ENCODE measurements at regions of chr7 and their contacts with region 1.

Region 1: DNA sequence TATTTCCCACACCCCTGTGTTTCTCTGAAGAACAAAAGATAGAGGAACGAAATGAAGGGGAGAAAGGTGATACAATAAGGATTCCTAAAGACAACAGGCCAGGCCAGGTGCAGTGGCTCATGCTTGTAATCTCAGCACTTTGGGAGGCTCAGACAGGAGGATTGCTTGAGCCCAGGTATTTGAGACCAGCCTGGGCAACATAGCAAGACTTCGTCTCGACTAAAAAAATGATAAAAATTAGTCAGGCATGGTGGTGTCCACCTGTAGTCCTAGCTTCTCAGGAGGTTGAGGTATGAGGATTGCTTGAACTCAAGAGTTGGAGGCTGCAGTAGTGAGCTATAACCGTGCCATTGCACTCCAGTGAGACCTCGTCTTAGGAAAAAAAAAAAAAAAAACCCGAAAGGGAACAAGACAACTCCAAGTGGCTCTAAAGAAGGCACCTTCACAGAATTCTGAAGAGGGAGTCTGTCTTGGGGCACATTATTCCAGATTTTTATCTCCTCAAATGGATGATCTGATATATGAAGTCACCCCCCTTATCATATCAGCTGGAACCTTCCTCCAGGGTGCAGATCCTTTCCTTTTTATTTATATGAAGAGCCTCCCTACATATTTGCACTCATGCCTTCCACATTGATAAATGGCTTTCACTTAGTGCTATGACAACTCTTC is 41.5 kb upstream of the FAM3C start:
- DNase-seq: no peak
- ATAC-seq: no peak
- H3K4me3 ChIP-seq: peak overlapping the region; percentile 50
- H3K4me3 Mint-ChIP-seq: peak overlapping the region in 9 of 10 donors; percentile 74 to 88 (median 80)
- H3K27ac ChIP-seq: peak overlapping the region; percentile 46
- H3K27ac Mint-ChIP-seq: peak overlapping the region; percentile 91 to 98 (median 96)
- H3K4me1 ChIP-seq: peaks cover 20 to 25% of the 10 kb centered on the region in 2 donors
- H3K4me1 Mint-ChIP-seq: peaks cover 12 to 53% (median 42%) of the 10 kb centered on the region in 7 donors
- H3K27me3 ChIP-seq: no peaks in the 10 kb centered on the region
- H3K27me3 Mint-ChIP-seq: no peaks in the 10 kb centered on the region

Region 2: DNA sequence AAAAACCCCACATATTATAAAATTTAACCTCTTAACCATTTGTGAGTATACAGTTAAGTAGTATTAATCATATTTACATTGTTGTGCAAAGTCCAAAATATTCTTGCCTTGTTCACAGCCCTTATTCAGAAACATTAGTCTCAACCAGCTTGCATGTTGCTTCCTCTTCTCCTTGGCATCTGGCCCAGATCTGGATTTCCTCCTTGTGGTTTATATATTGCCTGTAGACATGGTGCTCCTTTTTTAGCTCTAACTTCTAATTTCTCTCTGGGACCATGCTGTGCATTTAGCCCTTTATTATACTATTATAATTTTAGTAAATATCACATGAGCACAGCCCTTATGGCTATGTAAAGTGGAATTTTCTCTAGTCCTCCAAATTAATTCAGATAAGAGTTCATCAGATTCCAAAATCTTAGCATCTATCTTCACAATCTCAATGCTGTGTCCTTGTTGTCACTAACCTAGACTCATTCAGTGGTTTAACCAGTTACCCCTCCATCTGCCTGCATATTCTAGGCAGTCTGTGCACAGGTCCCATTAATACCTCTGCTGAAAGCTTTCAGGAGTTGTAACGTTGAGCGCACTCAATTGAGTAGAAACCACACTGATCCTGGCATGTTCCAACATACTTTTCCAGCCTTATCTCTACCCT is 441.1 kb before region 1 on chr7:
- CTCF ChIA-PET with region 1: no interaction called
- POLR2A ChIA-PET with region 1: no interaction called
- intact Hi-C with region 1: loop called in 1 of 2 experiments (anchors 5 kb)
- DNase-seq: peak in 7 of 9 donors; percentile 60 to 80 (median 75)
- ATAC-seq: peak; percentile 91
- H3K4me3 ChIP-seq: no peak overlapping the region
- H3K4me3 Mint-ChIP-seq: peak overlapping the region in 9 of 10 donors; percentile 10 to 69 (median 32)
- H3K27ac ChIP-seq: no peak overlapping the region
- H3K27ac Mint-ChIP-seq: peak overlapping the region in 3 of 9 donors; percentile 4 to 38 (median 34)
- H3K4me1 ChIP-seq: peaks cover 0 to 13% of the 10 kb centered on the region in 2 donors
- H3K4me1 Mint-ChIP-seq: peaks cover 7 to 56% (median 42%) of the 10 kb centered on the region in 7 donors
- H3K27me3 ChIP-seq: no peaks in the 10 kb centered on the region
- H3K27me3 Mint-ChIP-seq: peaks cover 0 to 42% (median 15%) of the 10 kb centered on the region in 5 donors

Region 3: DNA sequence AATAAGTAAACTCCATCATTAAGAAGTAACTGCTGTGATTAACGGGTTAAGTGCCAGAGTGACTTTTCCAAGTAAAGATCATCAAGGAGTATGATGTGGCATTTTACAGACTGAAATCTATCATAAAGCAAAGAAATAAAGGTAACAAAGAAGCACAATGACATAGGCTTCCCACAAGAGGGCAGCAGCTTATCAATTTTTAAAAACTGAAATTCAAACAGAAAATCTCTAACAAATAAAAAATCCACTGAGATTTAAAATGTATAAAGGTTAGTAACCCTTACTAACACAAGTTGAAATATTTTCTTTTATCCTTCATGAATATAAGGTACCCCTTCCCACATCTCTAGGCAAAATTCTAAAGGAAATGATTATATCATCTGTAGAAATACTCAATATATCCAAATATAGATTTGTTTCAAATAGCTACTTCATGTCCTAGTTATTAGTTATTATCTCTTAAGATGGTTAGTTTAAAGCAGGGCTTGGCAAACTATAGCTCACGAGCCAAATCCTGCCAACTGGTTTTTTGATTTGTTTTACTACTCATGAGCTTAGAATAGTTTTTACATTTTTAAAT is 70.7 kb before region 1 on chr7:
- CTCF ChIA-PET with region 1: interaction called, 9 read pairs
- POLR2A ChIA-PET with region 1: no interaction called
- intact Hi-C with region 1: loop called (anchors 1 to 2 kb)
- DNase-seq: peak in 6 of 9 donors; percentile 26 to 61 (median 57)
- ATAC-seq: peak; percentile 67
- H3K4me3 ChIP-seq: no peak overlapping the region
- H3K4me3 Mint-ChIP-seq: no peak overlapping the region
- H3K27ac ChIP-seq: no peak overlapping the region
- H3K27ac Mint-ChIP-seq: peak overlapping the region in 3 of 9 donors; percentile 45 to 69 (median 47)
- H3K4me1 ChIP-seq: no peaks in the 10 kb centered on the region
- H3K4me1 Mint-ChIP-seq: peaks cover 0 to 39% (median 4%) of the 10 kb centered on the region in 7 donors
- H3K27me3 ChIP-seq: no peaks in the 10 kb centered on the region
- H3K27me3 Mint-ChIP-seq: no peaks in the 10 kb centered on the region

Region 4: GRCh38 chr7:121480058-121480457 is 42.5 kb after region 1 on chr7:
- CTCF ChIA-PET with region 1: no interaction called
- POLR2A ChIA-PET with region 1: interaction called, 3 read pairs
- intact Hi-C with region 1: loop called in 1 of 2 experiments (anchors 5 kb)
- DNase-seq: no peak
- ATAC-seq: no peak
- H3K4me3 ChIP-seq: no peak overlapping the region
- H3K4me3 Mint-ChIP-seq: no peak overlapping the region
- H3K27ac ChIP-seq: no peak overlapping the region
- H3K27ac Mint-ChIP-seq: no peak overlapping the region
- H3K4me1 ChIP-seq: no peaks in the 10 kb centered on the region
- H3K4me1 Mint-ChIP-seq: peaks cover 2 to 7% (median 6%) of the 10 kb centered on the region in 7 donors
- H3K27me3 ChIP-seq: no peaks in the 10 kb centered on the region
- H3K27me3 Mint-ChIP-seq: no peaks in the 10 kb centered on the region

Region 5: GRCh38 chr7:121530227-121531174 is 92.9 kb after region 1 on chr7:
- CTCF ChIA-PET with region 1: no interaction called
- POLR2A ChIA-PET with region 1: no interaction called
- intact Hi-C with region 1: loop called in 1 of 2 experiments (anchors 1 kb)
- DNase-seq: peak in 1 of 9 donors; percentile 60
- ATAC-seq: peak; percentile 94
- H3K4me3 ChIP-seq: no peak overlapping the region
- H3K4me3 Mint-ChIP-seq: peak overlapping the region in 1 of 10 donors; percentile 54
- H3K27ac ChIP-seq: no peak overlapping the region
- H3K27ac Mint-ChIP-seq: peak overlapping the region in 3 of 9 donors; percentile 3 to 91 (median 51)
- H3K4me1 ChIP-seq: peaks cover 0 to 6% of the 10 kb centered on the region in 2 donors
- H3K4me1 Mint-ChIP-seq: peaks cover 0 to 45% (median 0%) of the 10 kb centered on the region in 7 donors
- H3K27me3 ChIP-seq: no peaks in the 10 kb centered on the region
- H3K27me3 Mint-ChIP-seq: peaks cover 0 to 4% (median 0%) of the 10 kb centered on the region in 5 donors